WTC11 (cell line): ENCODE measurements at regions of chr13 and their contacts with region 1.

Region 1: DNA sequence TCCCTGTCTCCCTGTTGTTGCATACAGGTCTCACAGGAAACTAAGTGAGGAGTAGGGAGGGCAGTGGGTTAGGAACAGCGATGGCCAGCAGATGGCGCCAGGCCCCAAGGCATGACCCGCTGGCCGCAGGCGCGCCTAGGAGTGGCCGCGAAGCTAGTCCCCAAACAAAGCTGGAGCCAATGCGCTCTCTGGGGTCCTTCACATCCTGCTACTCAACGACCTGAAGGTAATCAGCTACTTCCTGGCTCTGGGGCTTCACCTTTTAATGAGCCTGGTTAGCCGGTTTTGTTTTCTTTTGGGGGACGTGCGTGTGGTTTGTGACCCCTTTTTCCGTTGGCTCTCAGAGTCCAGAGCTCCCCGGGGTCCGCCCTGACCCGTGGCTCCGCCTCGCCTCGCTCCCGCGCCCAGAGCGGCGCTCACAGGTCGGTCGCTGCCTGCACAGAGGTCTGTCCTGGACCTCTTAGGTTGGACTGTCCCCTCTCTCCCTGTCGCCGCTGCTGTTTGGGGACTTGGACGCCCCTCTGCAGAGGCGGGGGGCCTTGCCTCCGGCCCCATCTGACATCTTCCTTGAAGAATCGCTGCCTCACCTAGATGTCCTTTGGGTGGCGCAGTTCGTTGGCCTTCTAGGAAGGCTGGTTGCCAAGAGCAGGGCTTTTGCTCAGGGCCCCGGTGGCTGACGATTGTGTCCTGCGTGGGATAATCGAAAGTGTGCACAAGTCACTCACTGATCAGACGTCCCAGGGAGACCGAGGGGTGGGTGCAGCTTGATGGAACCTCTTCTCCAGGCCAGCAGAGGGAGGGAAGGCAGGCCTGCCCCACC is 62.1 kb upstream of the GTF3A start:
- DNase-seq: peak; percentile 95
- ATAC-seq: peak; percentile 93
- H3K4me3 Mint-ChIP-seq: peak overlapping the region; percentile 80
- H3K27ac Mint-ChIP-seq: no peak overlapping the region
- H3K4me1 Mint-ChIP-seq: peaks cover 24% of the 10 kb centered on the region
- H3K27me3 Mint-ChIP-seq: no peaks in the 10 kb centered on the region; the same call in none of the 2 replicates
- CTCF ChIP-seq: peak; percentile 88

Region 2: DNA sequence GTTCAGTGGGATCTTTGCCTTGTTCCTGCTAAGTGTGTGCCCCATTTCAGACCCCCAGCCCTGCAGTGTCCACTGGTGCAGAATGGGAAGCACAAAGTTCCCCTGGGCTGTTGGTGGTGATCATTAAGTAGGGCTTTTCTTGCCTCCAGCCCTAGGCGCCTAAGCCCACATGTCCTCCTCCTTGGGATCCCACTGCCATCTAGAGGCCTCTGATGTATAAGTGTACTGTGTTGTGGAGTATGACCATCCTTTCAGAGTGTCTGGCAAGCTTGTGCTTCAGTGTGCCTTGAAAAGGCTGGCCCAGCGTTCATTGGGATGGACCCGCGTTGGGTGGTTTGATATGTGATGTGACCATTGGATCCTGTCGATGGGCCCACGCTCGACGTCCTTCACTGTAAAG is 733.6 kb before region 1 on chr13:
- CTCF ChIA-PET with region 1: no interaction called
- POLR2A ChIA-PET with region 1: no interaction called
- DNase-seq: peak; percentile 22
- ATAC-seq: peak; percentile 96
- H3K4me3 Mint-ChIP-seq: no peak overlapping the region
- H3K27ac Mint-ChIP-seq: peak overlapping the region; percentile 58
- H3K4me1 Mint-ChIP-seq: peaks cover 15% of the 10 kb centered on the region
- H3K27me3 Mint-ChIP-seq: no peaks in the 10 kb centered on the region
- CTCF ChIP-seq: no peak

Region 3: DNA sequence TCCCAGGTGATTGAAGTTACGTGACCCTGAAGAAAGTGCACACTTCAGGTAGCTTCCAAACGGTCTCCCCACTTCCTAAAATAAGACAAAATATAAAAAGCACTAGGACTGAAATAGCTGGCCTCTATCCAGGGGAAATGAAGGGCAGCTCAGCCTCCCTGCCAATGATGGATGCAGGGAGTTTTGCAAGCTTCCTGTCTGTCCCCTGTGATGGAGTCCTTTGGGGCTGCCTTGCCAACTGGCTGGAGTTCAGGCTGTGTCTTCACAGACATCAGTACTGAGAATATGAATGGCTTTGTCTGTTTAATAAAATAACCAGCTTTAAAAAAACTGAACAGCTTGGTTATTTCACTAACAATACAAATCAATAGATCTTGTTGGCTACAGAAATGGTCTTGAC is 500.3 kb before region 1 on chr13:
- CTCF ChIA-PET with region 1: no interaction called
- POLR2A ChIA-PET with region 1: no interaction called
- DNase-seq: no peak
- ATAC-seq: no peak
- H3K4me3 Mint-ChIP-seq: no peak overlapping the region
- H3K27ac Mint-ChIP-seq: no peak overlapping the region
- H3K4me1 Mint-ChIP-seq: no peaks in the 10 kb centered on the region
- H3K27me3 Mint-ChIP-seq: no peaks in the 10 kb centered on the region; the same call in 1 of the 2 replicates
- CTCF ChIP-seq: no peak

Region 4: DNA sequence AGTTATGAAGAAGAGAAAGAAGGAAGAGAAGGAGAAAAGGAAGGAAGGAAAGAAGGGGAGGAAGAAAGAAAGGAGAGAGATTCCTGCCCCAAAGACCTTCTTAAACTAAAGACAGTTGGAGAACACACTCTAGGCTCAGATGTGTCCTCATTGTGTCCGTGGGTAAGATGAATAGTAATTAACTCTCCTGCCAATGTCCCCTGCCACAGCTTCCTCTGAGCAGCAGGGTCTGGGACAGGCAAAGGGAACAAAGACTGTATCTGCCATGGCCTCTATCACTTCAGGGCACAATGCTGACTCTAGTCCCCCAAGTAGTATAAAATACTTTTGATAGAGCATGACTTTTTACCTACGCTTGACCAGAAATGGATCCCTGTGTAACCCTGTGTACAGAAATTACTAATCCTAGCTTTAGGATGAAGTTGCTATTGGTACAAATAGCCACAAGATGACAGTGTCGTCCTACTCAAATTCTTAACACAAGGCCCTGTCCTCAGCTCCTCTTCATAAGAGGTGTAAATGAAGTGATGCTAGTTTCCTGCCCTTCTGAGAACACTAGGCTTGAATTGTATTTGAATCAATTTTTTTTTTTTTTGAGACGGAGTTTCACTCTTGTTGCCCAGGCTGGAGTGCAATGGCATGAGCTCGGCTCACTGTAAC is 415.5 kb before region 1 on chr13:
- CTCF ChIA-PET with region 1: interaction called, 77 read pairs
- POLR2A ChIA-PET with region 1: no interaction called
- DNase-seq: no peak
- ATAC-seq: peak; percentile 72
- H3K4me3 Mint-ChIP-seq: no peak overlapping the region
- H3K27ac Mint-ChIP-seq: no peak overlapping the region
- H3K4me1 Mint-ChIP-seq: peaks cover 5% of the 10 kb centered on the region
- H3K27me3 Mint-ChIP-seq: no peaks in the 10 kb centered on the region
- CTCF ChIP-seq: no peak; the same call in 1 of the 2 replicates

Region 5: DNA sequence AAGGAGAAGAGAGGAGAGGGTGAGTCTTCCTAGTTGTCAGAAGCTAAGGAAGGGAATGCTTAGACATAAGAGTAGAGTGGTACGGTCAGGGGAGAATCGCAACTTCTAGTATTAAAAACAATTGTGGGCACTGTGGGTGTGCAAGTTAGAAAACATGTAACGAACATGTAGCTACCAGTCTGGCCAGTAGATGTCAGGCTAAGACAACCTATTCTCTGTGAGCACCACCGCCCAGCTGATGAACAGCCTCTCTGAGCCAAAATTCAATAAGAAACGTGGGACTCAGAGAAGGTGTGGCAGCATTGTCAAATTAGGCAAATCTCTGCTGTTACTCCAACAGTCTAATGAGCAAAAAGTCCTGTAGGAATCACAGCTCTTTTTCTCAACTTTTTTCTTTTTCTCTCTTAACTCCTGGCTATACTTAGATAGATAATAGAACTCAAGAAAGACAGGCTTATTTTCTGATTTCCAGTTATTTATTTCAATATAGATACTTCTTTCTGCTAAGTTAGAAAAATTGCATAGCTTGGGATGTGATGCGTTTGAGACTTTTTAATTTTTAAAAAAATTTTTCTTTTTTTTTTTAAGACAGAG is 376.9 kb before region 1 on chr13:
- CTCF ChIA-PET with region 1: interaction called, 68 read pairs
- POLR2A ChIA-PET with region 1: interaction called, 5 read pairs
- DNase-seq: peak; percentile 64
- ATAC-seq: peak; percentile 80
- H3K4me3 Mint-ChIP-seq: no peak overlapping the region
- H3K27ac Mint-ChIP-seq: no peak overlapping the region
- H3K4me1 Mint-ChIP-seq: peaks cover 12% of the 10 kb centered on the region
- H3K27me3 Mint-ChIP-seq: no peaks in the 10 kb centered on the region; the same call in 1 of the 2 replicates
- CTCF ChIP-seq: peak; percentile 60

Region 6: DNA sequence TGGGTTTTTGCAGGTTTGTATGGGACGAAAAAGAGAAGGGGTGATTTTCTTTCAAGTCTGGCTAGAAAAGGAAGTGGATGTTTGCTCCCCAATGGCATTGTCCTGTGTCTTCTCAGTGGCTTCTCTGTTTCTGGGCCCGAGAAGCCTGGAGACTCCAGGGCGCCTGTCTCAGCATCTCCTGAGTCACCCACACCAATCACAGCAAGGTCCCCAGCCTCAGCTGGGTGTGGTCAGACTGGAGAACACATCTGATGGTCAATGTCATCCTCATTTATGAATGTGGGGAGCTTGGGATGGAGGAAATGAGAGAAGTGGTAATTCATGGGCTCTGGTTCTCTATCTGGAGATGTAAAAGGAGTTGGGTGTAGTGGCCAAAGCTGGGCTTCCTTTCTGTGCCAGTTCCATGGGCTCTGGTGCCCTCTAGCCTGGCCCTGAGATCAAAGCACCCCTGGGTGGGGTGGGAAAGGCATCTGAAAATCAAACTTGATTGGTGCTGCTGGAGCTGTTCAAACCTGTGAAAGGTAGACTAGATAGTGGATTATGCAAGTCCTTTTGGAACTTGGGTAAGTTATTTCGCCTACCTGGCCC is 78.3 kb before region 1 on chr13:
- CTCF ChIA-PET with region 1: interaction called, 10 read pairs
- POLR2A ChIA-PET with region 1: interaction called, 3 read pairs
- DNase-seq: no peak
- ATAC-seq: no peak
- H3K4me3 Mint-ChIP-seq: no peak overlapping the region
- H3K27ac Mint-ChIP-seq: no peak overlapping the region
- H3K4me1 Mint-ChIP-seq: peaks cover 15% of the 10 kb centered on the region
- H3K27me3 Mint-ChIP-seq: no peaks in the 10 kb centered on the region
- CTCF ChIP-seq: no peak

Region 7: GRCh38 chr13:27379694-27380641 is 17.7 kb after region 1 on chr13:
- CTCF ChIA-PET with region 1: interaction called, 94 read pairs
- POLR2A ChIA-PET with region 1: no interaction called
- DNase-seq: peak; percentile 85
- ATAC-seq: peak; percentile 84
- H3K4me3 Mint-ChIP-seq: no peak overlapping the region
- H3K27ac Mint-ChIP-seq: no peak overlapping the region
- H3K4me1 Mint-ChIP-seq: peaks cover 25% of the 10 kb centered on the region
- H3K27me3 Mint-ChIP-seq: no peaks in the 10 kb centered on the region; the same call in 1 of the 2 replicates
- CTCF ChIP-seq: peak; percentile 73

Region 8: DNA sequence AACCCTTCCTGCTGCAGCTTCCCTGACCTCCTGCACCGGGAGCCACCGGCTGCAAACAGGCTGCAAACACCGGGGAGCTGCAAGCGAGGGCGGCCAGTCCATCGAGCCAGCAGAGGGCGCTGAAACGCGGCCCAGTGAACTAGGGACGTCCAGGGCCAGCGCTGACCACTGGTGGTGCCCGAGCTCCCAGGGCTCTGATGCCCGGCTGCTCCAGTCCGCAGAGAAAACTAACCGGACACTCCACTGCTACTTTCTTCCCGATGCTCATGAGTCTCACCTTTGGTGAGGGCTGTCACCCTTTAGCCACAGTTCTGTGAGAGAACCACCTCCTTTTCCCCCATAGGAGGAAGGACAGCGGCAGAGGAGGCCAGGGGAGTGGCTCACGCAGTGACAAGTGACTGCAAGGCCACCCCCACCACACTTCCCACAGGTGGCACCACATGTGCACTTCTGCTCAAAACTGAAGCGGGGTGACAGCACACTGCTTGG is 170.9 kb after region 1 on chr13:
- CTCF ChIA-PET with region 1: interaction called, 14 read pairs
- POLR2A ChIA-PET with region 1: no interaction called
- DNase-seq: peak; percentile 93
- ATAC-seq: peak; percentile 91
- H3K4me3 Mint-ChIP-seq: no peak overlapping the region
- H3K27ac Mint-ChIP-seq: no peak overlapping the region
- H3K4me1 Mint-ChIP-seq: no peaks in the 10 kb centered on the region; the same call in 1 of the 2 replicates
- H3K27me3 Mint-ChIP-seq: no peaks in the 10 kb centered on the region
- CTCF ChIP-seq: peak; percentile 77

Region 9: DNA sequence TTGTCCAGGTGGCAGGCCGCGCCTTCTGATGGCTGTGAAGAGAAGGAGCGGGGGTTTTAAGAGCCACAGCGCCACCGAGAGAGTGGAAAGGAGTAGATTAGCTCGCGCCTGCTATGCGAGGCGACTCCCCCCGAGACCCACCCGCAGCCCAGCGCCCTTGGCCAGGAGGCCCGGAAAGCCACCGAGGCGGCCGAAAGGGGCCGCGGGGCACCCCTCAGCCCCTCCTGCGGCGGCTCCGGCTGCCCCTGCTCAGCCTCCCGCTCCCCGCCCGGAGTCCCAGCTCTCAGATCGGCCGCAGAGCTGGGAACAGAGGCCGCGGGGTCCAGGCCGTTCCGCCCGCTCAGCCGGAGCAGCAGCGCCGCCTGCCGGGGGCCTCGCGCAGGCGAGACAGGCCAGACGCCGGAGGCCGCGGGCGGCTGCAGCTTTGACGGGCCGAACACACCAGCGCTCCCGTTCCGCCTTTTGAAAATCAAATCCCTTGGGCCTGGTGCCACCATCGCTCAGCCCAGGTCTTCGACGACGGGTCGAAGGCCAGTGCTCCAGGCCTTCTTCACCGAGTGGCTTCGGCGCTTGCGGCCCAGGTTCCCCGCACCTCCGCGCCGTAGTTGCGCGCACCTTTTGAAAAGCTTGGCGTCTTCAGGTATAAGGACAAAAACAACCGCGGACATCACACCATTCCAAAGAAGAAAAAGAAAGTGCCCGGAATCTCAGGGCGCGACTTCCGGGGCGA is 591.6 kb after region 1 on chr13:
- CTCF ChIA-PET with region 1: interaction called, 38 read pairs
- POLR2A ChIA-PET with region 1: no interaction called
- DNase-seq: peak; percentile 91
- ATAC-seq: peak; percentile 95
- H3K4me3 Mint-ChIP-seq: peak overlapping the region; percentile 74
- H3K27ac Mint-ChIP-seq: no peak overlapping the region
- H3K4me1 Mint-ChIP-seq: peaks cover 6% of the 10 kb centered on the region
- H3K27me3 Mint-ChIP-seq: peaks cover 99% of the 10 kb centered on the region
- CTCF ChIP-seq: peak; percentile 90